ENCODE measurements at regions of chr4 and their contacts with region 1.

Region 1: GRCh38 chr4:147691820-147692219 is 7.9 kb upstream of the PRMT9 start:
- DNase-seq: no peak
- H3K4me3 ChIP-seq: no peak overlapping the region
- H3K27ac ChIP-seq: no peak overlapping the region
- H3K4me1 ChIP-seq: no peaks in the 10 kb centered on the region
- H3K27me3 ChIP-seq: no peaks in the 10 kb centered on the region
- CTCF ChIP-seq: no peak

Region 2: GRCh38 chr4:148539387-148539786 is 847.6 kb after region 1 on chr4:
- CTCF ChIA-PET with region 1: no interaction called
- POLR2A ChIA-PET with region 1: interaction called, 10 read pairs
- intact Hi-C with region 1: no loop called
- DNase-seq: peak in 1 of 2 experiments; percentile 37
- H3K4me3 ChIP-seq: no peak overlapping the region
- H3K27ac ChIP-seq: no peak overlapping the region
- H3K4me1 ChIP-seq: no peaks in the 10 kb centered on the region
- H3K27me3 ChIP-seq: no peaks in the 10 kb centered on the region
- CTCF ChIP-seq: no peak

Region 3: DNA sequence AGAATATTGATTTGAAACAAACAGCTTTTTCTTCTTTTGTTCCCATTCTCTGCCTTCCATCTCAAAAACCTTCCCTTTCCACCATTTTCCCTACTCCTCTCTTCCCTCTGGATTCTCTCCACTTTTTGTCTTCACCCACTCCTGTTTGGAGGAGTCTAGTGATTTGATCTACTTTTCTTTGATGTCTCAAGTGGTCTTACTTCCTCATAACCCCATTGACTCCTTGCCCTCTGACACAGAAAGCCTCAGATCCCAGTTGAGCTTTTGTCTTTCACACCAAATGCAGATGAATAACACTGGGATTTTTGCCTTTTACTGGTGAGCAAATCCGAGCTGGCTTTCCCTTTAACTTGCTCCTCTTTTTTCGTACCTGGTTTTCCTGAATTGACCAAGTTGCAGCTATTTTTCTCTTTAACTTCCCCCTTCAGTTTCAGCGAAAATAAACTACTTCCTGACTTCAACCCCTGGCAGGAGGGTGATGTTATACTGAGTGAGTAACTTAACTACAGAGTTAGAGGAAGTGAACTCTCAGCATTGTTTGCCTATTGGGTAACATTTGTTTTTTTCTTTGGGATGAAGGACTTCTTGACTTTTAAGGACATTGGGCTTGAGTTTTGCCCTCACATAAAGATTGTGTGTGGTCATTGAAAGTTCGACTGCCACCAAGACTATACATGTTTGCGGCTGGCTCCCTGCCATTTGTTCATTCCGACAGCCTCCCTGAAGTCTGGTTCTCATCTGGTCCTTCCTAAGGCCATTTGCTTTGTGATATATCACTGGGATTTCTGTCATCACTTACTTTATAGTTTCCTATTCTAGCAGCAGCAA is 1143.2 kb after region 1 on chr4:
- CTCF ChIA-PET with region 1: no interaction called
- POLR2A ChIA-PET with region 1: no interaction called
- intact Hi-C with region 1: no loop called
- DNase-seq: peak in 1 of 2 experiments; percentile 36
- H3K4me3 ChIP-seq: no peak overlapping the region
- H3K27ac ChIP-seq: peak overlapping the region; percentile 65
- H3K4me1 ChIP-seq: 0 out of 2 replicates have a peak, but pooled peaks cover 4% of the 10 kb centered on the region
- H3K27me3 ChIP-seq: no peaks in the 10 kb centered on the region
- CTCF ChIP-seq: no peak

Measured in PC-9 (cell line).